ENCODE measurements at regions of chr15 and their contacts with region 1.

Region 1: DNA sequence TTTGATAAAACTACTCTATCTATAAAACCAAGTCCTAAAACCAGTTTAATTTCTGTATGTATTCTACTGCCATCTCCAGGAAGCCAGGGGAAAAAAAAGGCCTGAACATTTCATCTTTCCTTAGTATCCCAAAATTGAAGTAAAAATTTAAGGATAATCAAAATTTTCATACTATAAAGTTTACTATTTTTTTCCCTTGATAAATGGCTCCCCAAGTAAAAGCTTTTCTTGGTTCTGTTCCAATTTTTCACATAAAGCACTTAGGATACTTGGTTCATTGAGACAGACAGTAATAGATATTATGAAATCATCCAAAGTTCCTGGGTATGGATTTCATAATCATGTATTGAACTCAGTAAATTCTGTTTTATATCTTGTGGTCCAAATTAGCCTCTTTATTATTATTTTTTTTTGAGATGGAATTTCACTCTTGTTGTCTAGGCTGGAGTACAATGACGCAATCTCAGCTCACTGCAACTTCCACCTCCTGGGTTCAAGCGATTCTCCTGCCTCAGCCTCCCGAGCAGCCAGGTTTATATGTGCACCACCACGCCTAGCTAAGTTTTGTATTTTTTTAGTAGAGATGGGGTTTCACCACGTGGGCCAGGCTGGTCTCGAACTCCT is 34.5 kb downstream of the ICE2 start:
- DNase-seq: peak; percentile 51
- ATAC-seq: peak; percentile 59
- H3K4me3 ChIP-seq: no peak overlapping the region
- H3K27ac ChIP-seq: no peak overlapping the region
- H3K4me1 ChIP-seq: peaks cover 2% of the 10 kb centered on the region
- H3K27me3 ChIP-seq: no peaks in the 10 kb centered on the region
- CTCF ChIP-seq: peak; percentile 76
- POLR2A ChIP-seq: no peak
- RAD21 ChIP-seq: peak; percentile 76

Region 2: GRCh38 chr15:60362321-60363086 is 81.9 kb before region 1 on chr15:
- CTCF ChIA-PET with region 1: interaction called, 4 read pairs
- POLR2A ChIA-PET with region 1: no interaction called
- dilution Hi-C with region 1: no loop called
- in situ Hi-C with region 1: loop called (anchors 5 kb)
- intact Hi-C with region 1: loop called (anchors 1 kb)
- DNase-seq: peak; percentile 78
- ATAC-seq: peak; percentile 36
- H3K4me3 ChIP-seq: no peak overlapping the region
- H3K27ac ChIP-seq: peak overlapping the region; percentile 71; the same call in 1 of the 2 replicates
- H3K4me1 ChIP-seq: peaks cover 28% of the 10 kb centered on the region
- H3K27me3 ChIP-seq: no peaks in the 10 kb centered on the region
- CTCF ChIP-seq: no peak
- POLR2A ChIP-seq: no peak
- RAD21 ChIP-seq: no peak

Measured in IMR-90 (cell line).